ENCODE measurements at regions of chr17 and their contacts with region 1.

Region 1: DNA sequence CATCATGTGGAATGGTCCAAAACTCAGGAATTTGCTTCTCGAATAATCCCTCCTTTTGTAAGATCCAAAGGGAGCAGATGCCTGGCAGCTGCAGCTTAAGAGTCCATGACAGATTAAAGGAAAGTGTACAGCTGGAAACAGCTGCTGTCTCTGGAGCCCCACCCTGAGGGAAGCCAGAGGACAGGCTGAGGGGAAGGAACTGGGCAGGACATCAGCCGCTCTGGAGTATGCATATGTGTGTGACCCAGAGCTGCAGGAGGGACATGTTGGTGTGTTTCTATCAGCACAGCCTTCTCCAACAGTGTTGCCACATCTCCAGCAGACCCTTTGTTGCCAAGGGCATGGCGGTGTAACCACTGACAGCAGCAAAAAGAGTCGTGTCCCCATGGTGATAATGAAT is 46.2 kb downstream of the CYB561 start:
- DNase-seq: peak; percentile 84
- ATAC-seq: peak; percentile 96

Region 2: GRCh38 chr17:63274146-63274545 is 125.7 kb before region 1 on chr17:
- intact Hi-C with region 1: loop called (anchors 5 kb)
- DNase-seq: no peak
- ATAC-seq: peak; percentile 80

Region 3: GRCh38 chr17:63497708-63498483 is 98.0 kb after region 1 on chr17:
- intact Hi-C with region 1: no loop called
- DNase-seq: no peak
- ATAC-seq: no peak